ENCODE measurements at regions of chr6 and their contacts with region 1.

Region 1: GRCh38 chr6:161038229-161039031 is 46.9 kb downstream of the MAP3K4 start:
- DNase-seq: peak; percentile 96
- H3K4me3 ChIP-seq: no peak overlapping the region
- H3K27ac ChIP-seq: peak overlapping the region; percentile 93
- H3K4me1 ChIP-seq: peaks cover 32% of the 10 kb centered on the region
- H3K27me3 ChIP-seq: no peaks in the 10 kb centered on the region
- CTCF ChIP-seq: peak; percentile 36 to 51

Region 2: DNA sequence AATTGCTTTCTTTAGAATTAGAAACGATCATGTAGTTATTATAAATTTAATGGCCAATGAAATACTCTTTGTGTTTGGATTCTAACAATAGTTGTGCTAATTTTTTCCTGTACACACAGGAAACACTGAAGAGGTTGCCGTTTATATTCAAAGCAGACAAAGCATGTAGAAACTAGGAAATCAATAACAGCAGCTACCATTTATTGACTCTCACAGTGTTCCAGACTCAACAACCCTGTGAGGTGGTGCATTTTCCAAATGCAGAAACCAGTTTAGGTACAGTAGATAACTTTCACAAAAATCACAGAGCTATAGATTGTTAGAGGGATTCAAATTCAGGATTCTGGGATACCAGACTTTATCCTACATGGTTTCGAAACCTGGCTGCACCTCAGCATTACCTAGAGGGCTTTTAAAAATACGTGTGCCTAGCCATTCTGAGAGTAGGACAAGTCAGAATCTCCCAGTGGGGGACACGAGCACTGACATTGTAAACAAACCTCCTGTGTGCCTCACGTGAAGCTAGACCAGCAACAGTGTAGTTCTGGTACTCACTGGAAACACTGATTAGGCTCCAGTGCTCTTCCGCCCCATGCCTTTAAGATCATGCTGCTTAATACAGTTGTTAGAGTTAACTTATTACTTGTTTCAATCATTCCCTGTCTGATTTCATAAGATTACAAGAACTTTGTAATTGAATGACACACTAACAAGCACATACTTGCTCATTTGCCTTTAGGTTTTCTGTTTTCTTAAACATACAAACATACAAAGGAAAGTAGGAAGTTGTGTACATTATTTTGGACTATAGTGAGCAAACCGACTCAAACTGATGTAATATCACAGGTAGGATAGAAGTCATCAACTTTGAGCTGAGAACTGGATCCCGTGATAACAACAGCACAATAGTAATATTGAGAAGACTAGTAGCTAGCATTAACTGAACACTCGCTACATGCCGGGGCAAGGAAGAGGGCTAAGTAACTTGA is 19.0 kb after region 1 on chr6:
- CTCF ChIA-PET with region 1: no interaction called
- dilution Hi-C with region 1: no loop called
- in situ Hi-C with region 1: no loop called
- intact Hi-C with region 1: loop called (anchors 1 kb)
- DNase-seq: peak; percentile 61
- H3K4me3 ChIP-seq: no peak overlapping the region
- H3K27ac ChIP-seq: peak overlapping the region; percentile 6
- H3K4me1 ChIP-seq: peaks cover 12% of the 10 kb centered on the region
- H3K27me3 ChIP-seq: no peaks in the 10 kb centered on the region
- CTCF ChIP-seq: no peak

Region 3: DNA sequence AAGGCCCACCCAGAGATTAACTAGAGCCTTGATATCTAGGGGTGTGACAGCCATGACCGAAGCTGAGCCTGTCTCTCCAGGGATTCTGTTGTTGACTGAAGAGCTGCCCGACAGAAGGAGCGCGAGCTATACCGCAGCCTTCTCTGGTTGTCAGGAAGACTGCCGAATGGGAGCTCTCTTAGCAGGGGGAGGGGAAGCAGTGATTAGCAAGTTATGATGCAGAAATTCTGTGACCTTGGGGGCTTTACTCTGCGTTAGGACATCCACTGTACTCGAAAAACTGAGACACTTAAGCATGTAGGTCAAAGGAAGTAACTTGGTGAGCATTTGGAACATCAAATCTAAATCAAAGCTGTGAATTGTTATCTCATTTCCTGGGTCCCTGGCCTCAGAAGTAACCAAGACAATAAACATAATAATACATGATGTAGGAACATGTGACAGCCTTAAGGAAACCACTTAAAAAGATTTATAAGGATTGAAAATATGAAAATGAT is 37.8 kb after region 1 on chr6:
- CTCF ChIA-PET with region 1: no interaction called
- dilution Hi-C with region 1: no loop called
- in situ Hi-C with region 1: no loop called
- intact Hi-C with region 1: no loop called
- DNase-seq: no peak
- H3K4me3 ChIP-seq: no peak overlapping the region
- H3K27ac ChIP-seq: no peak overlapping the region
- H3K4me1 ChIP-seq: peaks cover 6% of the 10 kb centered on the region
- H3K27me3 ChIP-seq: no peaks in the 10 kb centered on the region
- CTCF ChIP-seq: no peak

Region 4: GRCh38 chr6:161111261-161111660 is 72.8 kb after region 1 on chr6:
- CTCF ChIA-PET with region 1: no interaction called
- dilution Hi-C with region 1: no loop called
- in situ Hi-C with region 1: no loop called
- intact Hi-C with region 1: no loop called
- DNase-seq: no peak
- H3K4me3 ChIP-seq: no peak overlapping the region
- H3K27ac ChIP-seq: no peak overlapping the region
- H3K4me1 ChIP-seq: peaks cover 12% of the 10 kb centered on the region
- H3K27me3 ChIP-seq: no peaks in the 10 kb centered on the region
- CTCF ChIP-seq: no peak

Region 5: DNA sequence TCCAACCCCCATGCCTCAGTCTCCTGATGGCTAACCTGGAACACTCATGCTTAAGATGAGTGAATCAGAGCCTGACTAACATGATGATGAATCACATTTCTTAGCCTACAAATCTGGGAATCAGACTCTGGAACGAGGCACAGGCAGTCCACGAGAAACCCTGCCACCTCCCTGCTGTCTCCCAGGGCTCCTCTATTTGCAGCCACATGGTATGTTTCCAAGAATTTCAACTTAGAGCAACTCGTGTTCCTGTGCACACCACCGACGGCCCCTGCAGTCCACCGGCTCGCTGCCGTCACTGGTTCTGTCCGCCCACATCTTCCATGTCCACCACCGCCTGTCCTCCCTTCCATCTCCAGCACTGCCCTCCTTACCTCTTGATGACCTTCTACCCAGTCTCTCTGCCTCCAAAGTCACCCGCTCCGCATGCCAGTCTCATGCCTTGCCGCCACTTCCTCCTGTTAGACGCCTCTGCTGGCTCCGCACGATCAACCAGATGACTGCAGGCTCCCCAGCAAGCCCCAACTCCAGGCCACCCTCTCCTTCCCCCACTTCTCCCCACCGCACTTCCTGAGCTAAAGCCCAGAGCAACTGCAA is 147.8 kb after region 1 on chr6:
- CTCF ChIA-PET with region 1: no interaction called
- dilution Hi-C with region 1: no loop called
- in situ Hi-C with region 1: no loop called
- intact Hi-C with region 1: no loop called
- DNase-seq: peak; percentile 78
- H3K4me3 ChIP-seq: no peak overlapping the region
- H3K27ac ChIP-seq: no peak overlapping the region
- H3K4me1 ChIP-seq: peaks cover 9% of the 10 kb centered on the region
- H3K27me3 ChIP-seq: no peaks in the 10 kb centered on the region
- CTCF ChIP-seq: no peak

Measured in mammary epithelial cell (primary cell).